ENCODE measurements at regions of chr1 and their contacts with region 1.

Region 1: GRCh38 chr1:192477630-192478029 is 97.9 kb upstream of the RGS1 start:
- DNase-seq: peak; percentile 63
- ATAC-seq: peak; percentile 87
- H3K4me3 ChIP-seq: no peak overlapping the region
- H3K27ac ChIP-seq: no peak overlapping the region
- H3K4me1 ChIP-seq: no peaks in the 10 kb centered on the region
- H3K27me3 ChIP-seq: no peaks in the 10 kb centered on the region
- CTCF ChIP-seq: peak; percentile 77
- POLR2A ChIP-seq: 0 out of 2 replicates have a peak, but pooled peaks have one; percentile 32
- RAD21 ChIP-seq: peak; percentile 90

Region 2: GRCh38 chr1:192609110-192610079 is 131.8 kb after region 1 on chr1:
- CTCF ChIA-PET with region 1: interaction called, 12 read pairs
- POLR2A ChIA-PET with region 1: no interaction called
- dilution Hi-C with region 1: no loop called
- in situ Hi-C with region 1: no loop called
- intact Hi-C with region 1: loop called (anchors 1 kb)
- DNase-seq: no peak
- ATAC-seq: no peak
- H3K4me3 ChIP-seq: no peak overlapping the region
- H3K27ac ChIP-seq: no peak overlapping the region
- H3K4me1 ChIP-seq: no peaks in the 10 kb centered on the region; the same call in 1 of the 2 replicates
- H3K27me3 ChIP-seq: no peaks in the 10 kb centered on the region
- CTCF ChIP-seq: no peak
- POLR2A ChIP-seq: no peak
- RAD21 ChIP-seq: no peak

Region 3: GRCh38 chr1:192808518-192809306 is 331.1 kb after region 1 on chr1 and contains the start of gene RGS2:
- CTCF ChIA-PET with region 1: interaction called, 11 read pairs
- POLR2A ChIA-PET with region 1: interaction called, 4 read pairs
- dilution Hi-C with region 1: no loop called
- in situ Hi-C with region 1: no loop called
- intact Hi-C with region 1: loop called (anchors 2 kb)
- DNase-seq: peak; percentile 95
- ATAC-seq: peak; percentile 95
- H3K4me3 ChIP-seq: peak within 1 kb of the TSS; percentile 73
- H3K27ac ChIP-seq: peak within 1 kb of the TSS; percentile 75
- H3K4me1 ChIP-seq: peaks cover 4% of the 10 kb centered on the region
- H3K27me3 ChIP-seq: no peaks in the 10 kb centered on the region
- CTCF ChIP-seq: peak; percentile 25; the same call in 1 of the 2 replicates
- POLR2A ChIP-seq: peak; percentile 99
- RAD21 ChIP-seq: peak; percentile 14; the same call in 1 of the 2 replicates
- total RNA-seq, gene RGS2: 19.7 and 25.0 TPM in 2 replicates

Region 4: GRCh38 chr1:193031438-193031837 is 553.8 kb after region 1 on chr1:
- CTCF ChIA-PET with region 1: interaction called, 3 read pairs
- POLR2A ChIA-PET with region 1: no interaction called
- dilution Hi-C with region 1: no loop called
- in situ Hi-C with region 1: no loop called
- intact Hi-C with region 1: loop called (anchors 5 kb)
- DNase-seq: peak; percentile 31
- ATAC-seq: peak; percentile 69
- H3K4me3 ChIP-seq: no peak overlapping the region
- H3K27ac ChIP-seq: no peak overlapping the region
- H3K4me1 ChIP-seq: no peaks in the 10 kb centered on the region
- H3K27me3 ChIP-seq: no peaks in the 10 kb centered on the region
- CTCF ChIP-seq: peak; percentile 46
- POLR2A ChIP-seq: no peak
- RAD21 ChIP-seq: peak; percentile 33

Region 5: GRCh38 chr1:193121616-193122593 is 644.3 kb after region 1 on chr1 and contains the start of gene CDC73:
- CTCF ChIA-PET with region 1: no interaction called
- POLR2A ChIA-PET with region 1: no interaction called
- dilution Hi-C with region 1: no loop called
- in situ Hi-C with region 1: loop called (anchors 10 kb)
- intact Hi-C with region 1: loop called (anchors 5 kb)
- DNase-seq: peak; percentile 95
- ATAC-seq: peak; percentile 97
- H3K4me3 ChIP-seq: peak within 1 kb of the TSS; percentile 71
- H3K27ac ChIP-seq: peak within 1 kb of the TSS; percentile 89
- H3K4me1 ChIP-seq: no peaks in the 10 kb centered on the region
- H3K27me3 ChIP-seq: no peaks in the 10 kb centered on the region
- CTCF ChIP-seq: peak; percentile 98
- POLR2A ChIP-seq: peak; percentile 91
- RAD21 ChIP-seq: peak; percentile 86
- total RNA-seq, gene CDC73: 29.6 and 44.7 TPM in 2 replicates